ENCODE measurements at regions of chr7 and their contacts with region 1.

Region 1: GRCh38 chr7:146090023-146090645 is 26.5 kb upstream of the CNTNAP2 start:
- DNase-seq: peak in 1 of 2 experiments; percentile 32
- H3K4me3 ChIP-seq: no peak overlapping the region
- H3K4me3 Mint-ChIP-seq: no peak overlapping the region
- H3K27ac Mint-ChIP-seq: no peak overlapping the region
- H3K4me1 ChIP-seq: no peaks in the 10 kb centered on the region
- H3K4me1 Mint-ChIP-seq: no peaks in the 10 kb centered on the region
- H3K27me3 ChIP-seq: no peaks in the 10 kb centered on the region
- H3K27me3 Mint-ChIP-seq: no peaks in the 10 kb centered on the region
- CTCF ChIP-seq: peak; percentile 74 to 75

Region 2: GRCh38 chr7:145036604-145037405 is 1053.3 kb before region 1 on chr7:
- CTCF ChIA-PET with region 1: no interaction called
- POLR2A ChIA-PET with region 1: no interaction called
- intact Hi-C with region 1: loop called (anchors 1 kb)
- DNase-seq: peak; percentile 43 to 69
- H3K4me3 ChIP-seq: no peak overlapping the region
- H3K4me3 Mint-ChIP-seq: no peak overlapping the region
- H3K27ac Mint-ChIP-seq: no peak overlapping the region
- H3K4me1 ChIP-seq: no peaks in the 10 kb centered on the region
- H3K4me1 Mint-ChIP-seq: no peaks in the 10 kb centered on the region
- H3K27me3 ChIP-seq: no peaks in the 10 kb centered on the region
- H3K27me3 Mint-ChIP-seq: peaks cover 11% of the 10 kb centered on the region
- CTCF ChIP-seq: peak; percentile 70 to 78

Region 3: GRCh38 chr7:145884716-145885514 is 205.2 kb before region 1 on chr7:
- CTCF ChIA-PET with region 1: interaction called, 7 read pairs
- POLR2A ChIA-PET with region 1: no interaction called
- intact Hi-C with region 1: loop called (anchors 1 kb)
- DNase-seq: no peak
- H3K4me3 ChIP-seq: no peak overlapping the region
- H3K4me3 Mint-ChIP-seq: no peak overlapping the region
- H3K27ac Mint-ChIP-seq: no peak overlapping the region
- H3K4me1 ChIP-seq: no peaks in the 10 kb centered on the region
- H3K4me1 Mint-ChIP-seq: no peaks in the 10 kb centered on the region
- H3K27me3 ChIP-seq: no peaks in the 10 kb centered on the region
- H3K27me3 Mint-ChIP-seq: peaks cover 3% of the 10 kb centered on the region
- CTCF ChIP-seq: no peak

Region 4: GRCh38 chr7:145893925-145894535 is 196.1 kb before region 1 on chr7:
- CTCF ChIA-PET with region 1: no interaction called
- POLR2A ChIA-PET with region 1: no interaction called
- intact Hi-C with region 1: loop called (anchors 1 kb)
- DNase-seq: no peak
- H3K4me3 ChIP-seq: no peak overlapping the region
- H3K4me3 Mint-ChIP-seq: no peak overlapping the region
- H3K27ac Mint-ChIP-seq: no peak overlapping the region
- H3K4me1 ChIP-seq: no peaks in the 10 kb centered on the region
- H3K4me1 Mint-ChIP-seq: no peaks in the 10 kb centered on the region
- H3K27me3 ChIP-seq: no peaks in the 10 kb centered on the region
- H3K27me3 Mint-ChIP-seq: peaks cover 3% of the 10 kb centered on the region
- CTCF ChIP-seq: no peak

Region 5: GRCh38 chr7:146002431-146003078 is 87.6 kb before region 1 on chr7:
- CTCF ChIA-PET with region 1: no interaction called
- POLR2A ChIA-PET with region 1: no interaction called
- intact Hi-C with region 1: no loop called
- DNase-seq: no peak
- H3K4me3 ChIP-seq: no peak overlapping the region
- H3K4me3 Mint-ChIP-seq: no peak overlapping the region
- H3K27ac Mint-ChIP-seq: no peak overlapping the region
- H3K4me1 ChIP-seq: no peaks in the 10 kb centered on the region
- H3K4me1 Mint-ChIP-seq: no peaks in the 10 kb centered on the region
- H3K27me3 ChIP-seq: no peaks in the 10 kb centered on the region
- H3K27me3 Mint-ChIP-seq: peaks cover 3% of the 10 kb centered on the region
- CTCF ChIP-seq: no peak